ENCODE measurements at regions of chr4 and their contacts with region 1.

Region 1: DNA sequence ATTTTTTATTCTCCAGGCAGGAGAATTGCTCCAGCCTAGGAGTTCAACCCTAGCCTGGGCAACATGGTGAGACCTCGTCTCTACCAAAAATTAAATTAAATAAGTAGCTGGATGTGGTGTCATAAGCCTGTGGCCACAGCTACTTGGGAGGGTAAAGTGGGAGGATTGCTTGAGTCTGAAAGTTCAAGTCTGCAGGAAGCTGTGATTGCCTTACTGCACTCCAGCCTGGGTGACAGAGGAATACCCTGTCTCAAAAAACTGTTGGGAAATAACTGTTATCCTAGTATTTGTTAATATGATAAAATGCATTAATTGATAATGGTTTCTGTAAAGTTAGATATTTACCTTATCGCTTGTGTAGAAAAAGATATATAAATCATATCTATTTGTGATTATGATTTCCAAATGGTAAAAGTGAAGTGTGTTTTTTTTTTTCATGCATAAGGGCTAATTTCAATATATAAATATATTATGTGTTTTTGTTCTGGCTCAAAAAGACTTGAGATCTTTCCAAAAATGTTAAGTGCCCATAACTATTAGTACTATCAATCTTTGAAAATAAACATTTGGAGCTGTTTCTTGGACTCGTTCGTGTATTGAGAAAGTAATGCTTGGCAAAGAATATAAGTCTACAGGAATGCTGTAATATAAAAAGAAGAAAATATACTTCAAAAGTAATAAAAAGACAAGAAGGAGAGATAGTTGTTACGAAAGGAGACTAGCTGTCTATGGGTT is 396.6 kb downstream of the ADGRL3 start:
- DNase-seq: no peak
- H3K4me3 ChIP-seq: no peak overlapping the region
- H3K4me3 Mint-ChIP-seq: no peak overlapping the region
- H3K27ac Mint-ChIP-seq: no peak overlapping the region
- H3K4me1 ChIP-seq: no peaks in the 10 kb centered on the region
- H3K4me1 Mint-ChIP-seq: no peaks in the 10 kb centered on the region
- H3K27me3 ChIP-seq: no peaks in the 10 kb centered on the region
- H3K27me3 Mint-ChIP-seq: no peaks in the 10 kb centered on the region
- CTCF ChIP-seq: no peak

Region 2: GRCh38 chr4:61397174-61397573 is 199.6 kb before region 1 on chr4:
- CTCF ChIA-PET with region 1: no interaction called
- POLR2A ChIA-PET with region 1: no interaction called
- intact Hi-C with region 1: no loop called
- DNase-seq: no peak
- H3K4me3 ChIP-seq: no peak overlapping the region
- H3K4me3 Mint-ChIP-seq: no peak overlapping the region
- H3K27ac Mint-ChIP-seq: no peak overlapping the region
- H3K4me1 ChIP-seq: no peaks in the 10 kb centered on the region
- H3K4me1 Mint-ChIP-seq: no peaks in the 10 kb centered on the region
- H3K27me3 ChIP-seq: no peaks in the 10 kb centered on the region
- H3K27me3 Mint-ChIP-seq: no peaks in the 10 kb centered on the region
- CTCF ChIP-seq: no peak

Region 3: GRCh38 chr4:61468091-61468720 is 128.6 kb before region 1 on chr4:
- CTCF ChIA-PET with region 1: no interaction called
- POLR2A ChIA-PET with region 1: no interaction called
- intact Hi-C with region 1: no loop called
- DNase-seq: no peak
- H3K4me3 ChIP-seq: no peak overlapping the region
- H3K4me3 Mint-ChIP-seq: no peak overlapping the region
- H3K27ac Mint-ChIP-seq: no peak overlapping the region
- H3K4me1 ChIP-seq: no peaks in the 10 kb centered on the region
- H3K4me1 Mint-ChIP-seq: peaks cover 8% of the 10 kb centered on the region
- H3K27me3 ChIP-seq: no peaks in the 10 kb centered on the region
- H3K27me3 Mint-ChIP-seq: no peaks in the 10 kb centered on the region
- CTCF ChIP-seq: no peak

Region 4: DNA sequence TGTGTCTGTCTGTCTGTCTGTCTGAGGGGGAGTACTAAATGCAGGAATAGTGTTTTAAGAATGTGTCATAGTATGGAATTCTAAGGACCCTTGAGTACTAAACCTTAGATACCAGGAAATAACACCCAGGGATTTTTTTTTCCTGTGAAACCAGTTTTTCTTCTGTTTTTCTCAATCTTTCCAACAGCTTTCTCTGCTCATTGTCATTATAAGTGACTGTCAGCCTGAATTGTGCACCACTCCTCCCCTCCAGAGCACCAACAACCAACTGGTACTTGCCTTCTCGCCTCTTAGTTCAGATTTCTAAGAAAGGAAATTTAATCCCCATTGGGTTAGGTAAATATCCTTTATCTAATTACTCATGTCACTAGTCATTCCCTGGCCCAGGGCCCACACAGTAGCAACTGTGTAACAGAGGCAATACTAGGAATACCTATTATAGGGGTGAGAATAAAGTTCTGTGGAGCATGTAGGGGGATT is 76.1 kb before region 1 on chr4:
- CTCF ChIA-PET with region 1: no interaction called
- POLR2A ChIA-PET with region 1: no interaction called
- intact Hi-C with region 1: loop called (anchors 2 kb)
- DNase-seq: no peak
- H3K4me3 ChIP-seq: no peak overlapping the region
- H3K4me3 Mint-ChIP-seq: no peak overlapping the region
- H3K27ac Mint-ChIP-seq: peak overlapping the region; percentile 45
- H3K4me1 ChIP-seq: peaks cover 12% of the 10 kb centered on the region
- H3K4me1 Mint-ChIP-seq: peaks cover 17% of the 10 kb centered on the region
- H3K27me3 ChIP-seq: no peaks in the 10 kb centered on the region
- H3K27me3 Mint-ChIP-seq: no peaks in the 10 kb centered on the region
- CTCF ChIP-seq: no peak

Region 5: DNA sequence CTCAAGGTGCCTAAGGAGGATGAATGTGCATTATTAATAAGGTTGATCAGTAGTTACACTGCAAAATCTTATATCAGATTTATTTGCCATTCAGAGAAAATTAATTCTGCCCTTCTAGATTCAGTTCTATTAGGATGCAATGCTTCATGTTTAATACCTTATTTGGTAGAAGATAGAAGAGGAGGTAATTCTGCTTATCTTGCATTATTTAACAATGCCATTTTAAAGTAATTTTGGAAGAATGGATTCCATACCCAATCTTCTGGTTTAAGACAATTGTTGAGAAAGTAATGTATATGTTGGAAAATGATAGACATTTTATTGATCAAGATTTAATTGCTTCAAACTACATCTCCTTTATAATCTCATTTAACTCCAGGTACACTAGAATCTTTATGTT is 35.7 kb before region 1 on chr4:
- CTCF ChIA-PET with region 1: no interaction called
- POLR2A ChIA-PET with region 1: no interaction called
- intact Hi-C with region 1: no loop called
- DNase-seq: no peak
- H3K4me3 ChIP-seq: no peak overlapping the region
- H3K4me3 Mint-ChIP-seq: no peak overlapping the region
- H3K27ac Mint-ChIP-seq: no peak overlapping the region
- H3K4me1 ChIP-seq: peaks cover 34% of the 10 kb centered on the region
- H3K4me1 Mint-ChIP-seq: peaks cover 24% of the 10 kb centered on the region
- H3K27me3 ChIP-seq: no peaks in the 10 kb centered on the region
- H3K27me3 Mint-ChIP-seq: no peaks in the 10 kb centered on the region
- CTCF ChIP-seq: no peak

Region 6: DNA sequence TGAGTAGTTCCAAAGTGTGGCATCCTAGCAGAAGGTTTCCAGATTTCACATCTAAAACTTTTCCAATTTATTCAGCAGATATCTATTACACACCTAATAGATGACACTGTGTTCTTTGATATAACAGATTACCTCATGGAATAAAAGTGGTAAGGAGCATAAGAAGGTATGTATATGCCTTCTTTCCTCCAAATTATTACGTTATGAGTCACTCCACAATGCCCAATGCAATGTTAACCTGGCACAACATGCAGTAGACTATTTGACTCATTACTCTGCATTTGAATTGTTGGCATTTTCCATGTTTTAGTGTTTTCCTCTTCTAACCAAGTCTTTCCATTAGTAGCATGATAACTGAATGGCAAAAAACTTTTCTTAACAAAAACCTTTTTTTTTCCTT is 13.1 kb before region 1 on chr4:
- CTCF ChIA-PET with region 1: no interaction called
- POLR2A ChIA-PET with region 1: no interaction called
- intact Hi-C with region 1: no loop called
- DNase-seq: no peak
- H3K4me3 ChIP-seq: no peak overlapping the region
- H3K4me3 Mint-ChIP-seq: no peak overlapping the region
- H3K27ac Mint-ChIP-seq: no peak overlapping the region
- H3K4me1 ChIP-seq: no peaks in the 10 kb centered on the region
- H3K4me1 Mint-ChIP-seq: no peaks in the 10 kb centered on the region
- H3K27me3 ChIP-seq: no peaks in the 10 kb centered on the region
- H3K27me3 Mint-ChIP-seq: no peaks in the 10 kb centered on the region
- CTCF ChIP-seq: no peak